Endothelial cell of umbilical vein (primary cell): ENCODE measurements at regions of chr1 and their contacts with region 1.

Region 1: DNA sequence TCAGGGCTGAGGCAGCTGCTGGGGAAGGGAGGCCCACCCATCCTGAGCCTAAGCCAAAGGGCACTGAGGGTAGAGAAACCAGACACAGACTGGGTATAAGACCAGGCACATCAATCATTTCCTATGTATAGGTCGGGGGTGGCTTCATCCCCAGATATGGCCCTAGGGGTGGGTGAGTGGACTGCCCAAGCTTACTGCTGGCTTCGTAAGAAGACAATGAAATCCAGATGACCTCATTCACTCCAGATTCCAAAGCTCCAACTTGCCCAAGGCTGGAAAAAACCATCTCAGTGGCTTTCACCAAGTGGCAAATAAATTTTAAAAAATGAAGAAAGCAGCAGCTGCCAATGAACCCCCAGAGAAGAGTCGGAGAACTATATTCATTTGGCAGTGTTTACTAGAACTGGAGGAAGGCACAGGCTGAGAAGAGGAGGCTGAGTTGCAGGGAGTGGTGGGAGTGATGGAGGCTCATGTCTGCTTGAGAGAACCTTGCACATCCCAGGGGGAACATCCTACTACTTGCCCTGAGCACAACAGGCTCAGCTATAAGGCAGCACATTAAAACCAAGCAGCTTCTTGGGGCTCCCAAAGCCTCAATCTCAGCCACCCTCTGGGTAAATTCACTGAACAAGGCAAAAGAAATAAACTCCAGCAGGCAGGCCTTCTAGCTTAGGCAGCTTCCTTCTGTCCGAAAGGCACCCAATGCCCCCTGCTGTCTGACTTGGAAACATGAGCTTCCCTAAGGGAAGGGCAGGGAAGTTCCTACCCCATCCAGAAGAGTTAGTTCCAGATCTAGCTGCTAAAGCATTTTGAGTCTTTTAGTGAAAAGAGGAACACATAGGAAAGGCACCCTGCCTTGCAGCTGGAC is 14.1 kb downstream of the PEA15 start:
- DNase-seq: peak; percentile 73
- H3K4me3 ChIP-seq: no peak overlapping the region
- H3K27ac ChIP-seq: peak overlapping the region; percentile 16
- H3K4me1 ChIP-seq: peaks cover 12% of the 10 kb centered on the region
- H3K27me3 ChIP-seq: no peaks in the 10 kb centered on the region
- CTCF ChIP-seq: peak; percentile 52 to 70
- POLR2A ChIP-seq: no peak

Region 2: DNA sequence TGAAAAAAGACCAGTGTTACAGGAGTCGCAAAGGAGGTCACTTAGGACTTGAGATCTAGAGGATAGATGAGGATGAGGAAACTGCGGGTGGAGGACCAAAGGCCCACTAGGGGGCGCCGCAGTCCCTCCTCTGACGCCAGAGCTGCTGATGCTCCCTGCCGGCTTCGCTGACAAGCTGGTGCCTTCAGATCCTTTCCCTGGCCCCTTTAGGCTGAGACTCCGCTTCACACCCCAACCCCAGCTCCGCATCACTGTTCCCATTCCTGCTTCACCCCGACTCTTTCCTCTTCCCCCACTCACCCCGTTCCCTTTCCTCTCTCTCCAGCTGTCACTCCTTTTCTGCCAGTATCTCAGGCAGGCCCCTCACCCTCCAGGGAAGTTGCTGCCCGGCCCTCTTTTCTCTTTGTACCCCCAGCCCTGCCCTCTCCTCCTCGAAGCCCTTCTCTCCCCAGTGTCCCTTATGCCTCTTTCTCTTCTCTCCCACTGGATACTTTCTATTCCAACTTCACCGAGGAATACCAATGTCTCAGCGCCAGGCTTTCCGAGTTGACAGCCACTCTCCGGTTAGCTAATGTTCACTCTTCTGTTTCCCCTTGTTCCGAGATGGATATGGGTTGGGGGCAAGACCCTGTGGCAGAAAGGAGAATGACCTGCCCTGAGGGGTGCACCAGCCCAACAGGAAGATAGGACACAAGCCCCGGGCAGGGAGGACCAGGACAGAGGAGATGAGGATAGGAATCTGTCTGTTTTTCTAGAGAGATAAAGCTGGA is 133.4 kb before region 1 on chr1:
- CTCF ChIA-PET with region 1: interaction called, 27 read pairs
- POLR2A ChIA-PET with region 1: no interaction called
- dilution Hi-C with region 1: no loop called
- intact Hi-C with region 1: no loop called
- DNase-seq: peak; percentile 65
- H3K4me3 ChIP-seq: no peak overlapping the region
- H3K27ac ChIP-seq: no peak overlapping the region
- H3K4me1 ChIP-seq: no peaks in the 10 kb centered on the region
- H3K27me3 ChIP-seq: peaks cover 35 to 37% of the 10 kb centered on the region in 2 experiments
- CTCF ChIP-seq: peak; percentile 82 to 99
- POLR2A ChIP-seq: no peak

Region 3: DNA sequence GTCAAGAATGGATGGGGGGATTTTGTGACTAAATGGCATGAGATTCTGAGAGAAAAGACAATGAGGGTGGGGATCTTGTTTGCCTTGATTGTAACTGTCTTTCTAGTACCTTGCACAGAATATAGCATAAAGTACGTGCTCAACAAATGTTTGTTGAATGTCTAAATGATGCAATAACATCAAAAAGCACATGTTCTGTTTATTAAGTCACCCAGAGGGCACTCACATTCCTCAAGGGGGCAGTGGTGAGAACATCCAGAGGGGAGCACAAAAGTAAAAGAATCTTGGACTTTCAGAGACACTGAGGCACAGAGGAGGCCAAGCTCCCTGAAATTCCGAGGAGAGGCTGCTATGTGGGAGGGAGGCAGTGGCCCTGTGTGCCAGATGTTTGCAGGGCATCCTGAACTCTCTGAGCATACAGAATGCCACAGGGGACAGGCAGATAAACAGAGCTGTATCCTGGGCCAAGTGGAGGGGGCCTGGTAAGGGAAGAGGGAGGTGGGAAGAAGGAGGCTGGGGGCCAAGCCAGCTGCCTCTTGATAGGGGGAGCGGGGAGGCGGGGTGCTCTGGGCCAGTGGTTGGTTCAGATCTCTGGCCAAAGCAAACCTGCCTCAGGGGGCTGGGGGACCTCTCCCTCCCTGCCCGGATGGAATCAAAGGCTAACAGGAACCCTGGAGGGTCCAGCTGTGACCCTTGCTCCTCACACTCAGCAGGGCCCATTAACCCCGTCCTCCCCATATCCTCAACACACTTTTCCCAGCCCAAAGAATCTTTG is 110.2 kb before region 1 on chr1:
- CTCF ChIA-PET with region 1: interaction called, 105 read pairs
- POLR2A ChIA-PET with region 1: no interaction called
- dilution Hi-C with region 1: no loop called
- intact Hi-C with region 1: no loop called
- DNase-seq: peak; percentile 34
- H3K4me3 ChIP-seq: no peak overlapping the region
- H3K27ac ChIP-seq: no peak overlapping the region
- H3K4me1 ChIP-seq: no peaks in the 10 kb centered on the region
- H3K27me3 ChIP-seq: peaks cover 20 to 27% of the 10 kb centered on the region in 2 experiments
- CTCF ChIP-seq: peak; percentile 55 to 58
- POLR2A ChIP-seq: no peak

Region 4: GRCh38 chr1:160161965-160162705 is 57.2 kb before region 1 on chr1:
- CTCF ChIA-PET with region 1: interaction called, 18 read pairs
- POLR2A ChIA-PET with region 1: no interaction called
- dilution Hi-C with region 1: no loop called
- intact Hi-C with region 1: no loop called
- DNase-seq: peak; percentile 34
- H3K4me3 ChIP-seq: no peak overlapping the region
- H3K27ac ChIP-seq: no peak overlapping the region
- H3K4me1 ChIP-seq: no peaks in the 10 kb centered on the region
- H3K27me3 ChIP-seq: peaks cover 8 to 11% of the 10 kb centered on the region in 2 experiments
- CTCF ChIP-seq: peak; percentile 20 to 68
- POLR2A ChIP-seq: no peak

Region 5: GRCh38 chr1:160205242-160206035 is 13.9 kb before region 1 on chr1 and contains the start of gene PEA15:
- CTCF ChIA-PET with region 1: interaction called, 65 read pairs
- POLR2A ChIA-PET with region 1: interaction called, 4 read pairs
- dilution Hi-C with region 1: no loop called
- intact Hi-C with region 1: no loop called
- DNase-seq: peak; percentile 54
- H3K4me3 ChIP-seq: peak within 1 kb of the TSS; percentile 55 to 81 (median 72)
- H3K27ac ChIP-seq: peak within 1 kb of the TSS; percentile 73
- H3K4me1 ChIP-seq: peaks cover 45% of the 10 kb centered on the region
- H3K27me3 ChIP-seq: no peaks in the 10 kb centered on the region
- CTCF ChIP-seq: no peak
- POLR2A ChIP-seq: no peak
- total RNA-seq, gene PEA15: 250 and 270 TPM in 2 replicates

Region 6: DNA sequence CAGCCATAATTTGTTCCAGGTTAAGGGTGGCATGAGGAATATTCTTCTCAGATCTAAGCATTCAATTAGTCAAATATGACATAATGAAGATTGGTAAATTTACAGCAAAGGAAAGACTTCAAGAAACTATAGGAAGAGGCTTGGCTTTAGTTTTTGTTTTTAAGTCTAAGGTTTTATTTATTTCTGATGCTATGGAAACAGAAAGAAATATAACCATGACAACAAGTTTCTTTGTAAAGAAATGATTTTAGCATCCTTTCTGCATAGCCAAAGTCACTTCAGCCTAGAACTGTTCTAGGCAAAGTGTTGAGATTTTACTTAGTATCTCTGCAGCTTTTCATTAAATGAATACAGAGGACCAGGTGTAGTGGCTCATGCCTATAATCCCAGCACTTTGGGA is 13.6 kb after region 1 on chr1:
- CTCF ChIA-PET with region 1: interaction called, 31 read pairs
- POLR2A ChIA-PET with region 1: no interaction called
- dilution Hi-C with region 1: no loop called
- intact Hi-C with region 1: no loop called
- DNase-seq: no peak
- H3K4me3 ChIP-seq: no peak overlapping the region
- H3K27ac ChIP-seq: no peak overlapping the region
- H3K4me1 ChIP-seq: no peaks in the 10 kb centered on the region
- H3K27me3 ChIP-seq: no peaks in the 10 kb centered on the region
- CTCF ChIP-seq: no peak
- POLR2A ChIP-seq: no peak

Region 7: GRCh38 chr1:160244209-160244608 is 24.9 kb after region 1 on chr1:
- CTCF ChIA-PET with region 1: interaction called, 21 read pairs
- POLR2A ChIA-PET with region 1: no interaction called
- dilution Hi-C with region 1: no loop called
- intact Hi-C with region 1: no loop called
- DNase-seq: peak; percentile 28
- H3K4me3 ChIP-seq: no peak overlapping the region
- H3K27ac ChIP-seq: no peak overlapping the region
- H3K4me1 ChIP-seq: peaks cover 5% of the 10 kb centered on the region
- H3K27me3 ChIP-seq: no peaks in the 10 kb centered on the region
- CTCF ChIP-seq: no peak
- POLR2A ChIP-seq: no peak

Region 8: GRCh38 chr1:160400223-160400645 is 180.9 kb after region 1 on chr1 and contains the start of gene VANGL2:
- CTCF ChIA-PET with region 1: no interaction called
- POLR2A ChIA-PET with region 1: no interaction called
- dilution Hi-C with region 1: no loop called
- intact Hi-C with region 1: no loop called
- DNase-seq: no peak
- H3K4me3 ChIP-seq: no peak within 1 kb of the TSS
- H3K27ac ChIP-seq: no peak within 1 kb of the TSS
- H3K4me1 ChIP-seq: peaks cover 13% of the 10 kb centered on the region
- H3K27me3 ChIP-seq: peaks cover 73 to 87% of the 10 kb centered on the region in 2 experiments
- CTCF ChIP-seq: no peak
- POLR2A ChIP-seq: no peak
- total RNA-seq, gene VANGL2: not detected in 2 replicates